Activated naive CD4-positive, alpha-beta T cell treated with anti-CD3 and anti-CD28 coated beads, Interleukin-2, amount 10 ng/mL, durations not matched to agents 7 days and 5 days (primary cell): ENCODE measurements at regions of chr5 and their contacts with region 1.

Region 1: GRCh38 chr5:76310208-76310607 is 92.9 kb upstream of the IQGAP2 start:
- DNase-seq: no peak
- H3K4me3 Mint-ChIP-seq: no peak overlapping the region
- H3K27ac Mint-ChIP-seq: no peak overlapping the region
- H3K4me1 Mint-ChIP-seq: peaks cover 6% of the 10 kb centered on the region
- H3K27me3 Mint-ChIP-seq: peaks cover 4% of the 10 kb centered on the region

Region 2: GRCh38 chr5:76273206-76273885 is 36.9 kb before region 1 on chr5:
- CTCF ChIA-PET with region 1: interaction called, 10 read pairs
- DNase-seq: no peak
- H3K4me3 Mint-ChIP-seq: no peak overlapping the region
- H3K27ac Mint-ChIP-seq: no peak overlapping the region
- H3K4me1 Mint-ChIP-seq: peaks cover 19% of the 10 kb centered on the region
- H3K27me3 Mint-ChIP-seq: peaks cover 4% of the 10 kb centered on the region

Region 3: GRCh38 chr5:76299592-76299991 is 10.6 kb before region 1 on chr5:
- CTCF ChIA-PET with region 1: interaction called, 17 read pairs
- DNase-seq: peak; percentile 29
- H3K4me3 Mint-ChIP-seq: no peak overlapping the region
- H3K27ac Mint-ChIP-seq: peak overlapping the region; percentile 91
- H3K4me1 Mint-ChIP-seq: peaks cover 43% of the 10 kb centered on the region
- H3K27me3 Mint-ChIP-seq: peaks cover 12% of the 10 kb centered on the region

Region 4: GRCh38 chr5:76325876-76326491 is 15.8 kb after region 1 on chr5:
- CTCF ChIA-PET with region 1: interaction called, 11 read pairs
- DNase-seq: peak; percentile 80
- H3K4me3 Mint-ChIP-seq: peak overlapping the region; percentile 39
- H3K27ac Mint-ChIP-seq: peak overlapping the region; percentile 98
- H3K4me1 Mint-ChIP-seq: peaks cover 75% of the 10 kb centered on the region
- H3K27me3 Mint-ChIP-seq: no peaks in the 10 kb centered on the region

Region 5: GRCh38 chr5:76608833-76609232 is 298.6 kb after region 1 on chr5:
- CTCF ChIA-PET with region 1: no interaction called
- DNase-seq: no peak
- H3K4me3 Mint-ChIP-seq: no peak overlapping the region
- H3K27ac Mint-ChIP-seq: peak overlapping the region; percentile 56
- H3K4me1 Mint-ChIP-seq: peaks cover 8% of the 10 kb centered on the region
- H3K27me3 Mint-ChIP-seq: no peaks in the 10 kb centered on the region